Dendritic cell treated with granulocyte-macrophage colony-stimulating factor and Interleukin-4, amounts not matched to agents 40 ng/mL and 50 ng/mL, for 4 days (primary cell): ENCODE measurements at regions of chr1 and their contacts with region 1.

Region 1: DNA sequence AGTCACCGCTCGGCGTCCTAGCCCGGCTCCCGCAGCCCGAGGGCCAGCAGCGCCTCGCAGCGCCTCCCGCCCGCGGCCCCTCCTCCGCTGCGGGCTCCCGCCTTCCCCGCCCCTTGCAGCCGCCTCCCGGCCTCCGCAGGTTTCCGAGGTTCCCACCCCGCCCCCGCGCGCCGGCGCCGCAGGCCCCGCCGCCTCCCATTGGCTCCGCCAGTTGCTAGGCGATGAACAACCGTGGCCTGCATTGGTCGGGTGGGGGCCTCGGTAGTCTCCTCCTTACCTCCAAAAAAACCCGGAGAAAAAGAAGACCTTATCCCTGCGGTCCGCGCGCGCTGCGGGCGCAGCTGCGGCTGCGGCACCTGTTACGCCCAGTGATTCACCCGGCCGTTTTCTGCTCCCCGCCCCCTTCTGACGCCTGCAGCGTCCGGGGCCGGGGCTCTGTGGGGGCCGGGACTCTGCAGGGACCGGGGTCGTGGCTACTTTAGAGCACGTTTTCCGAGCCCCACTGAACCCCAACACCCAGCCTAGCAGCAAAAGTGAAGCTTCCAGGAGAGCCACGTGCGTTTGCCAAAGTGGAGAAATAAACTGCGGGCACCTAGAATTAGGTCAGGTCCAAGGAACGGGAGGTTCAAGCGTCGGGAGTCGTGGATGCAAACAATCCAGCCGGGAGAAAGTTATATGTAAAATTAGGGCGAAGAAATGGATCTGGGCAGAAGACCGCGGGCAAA is at the start of gene SSX2IP:
- H3K4me3 Mint-ChIP-seq: peak within 1 kb of the TSS; percentile 96
- H3K27ac Mint-ChIP-seq: peak within 1 kb of the TSS; percentile 92
- H3K4me1 Mint-ChIP-seq: peaks cover 40% of the 10 kb centered on the region
- H3K27me3 Mint-ChIP-seq: no peaks in the 10 kb centered on the region

Region 2: DNA sequence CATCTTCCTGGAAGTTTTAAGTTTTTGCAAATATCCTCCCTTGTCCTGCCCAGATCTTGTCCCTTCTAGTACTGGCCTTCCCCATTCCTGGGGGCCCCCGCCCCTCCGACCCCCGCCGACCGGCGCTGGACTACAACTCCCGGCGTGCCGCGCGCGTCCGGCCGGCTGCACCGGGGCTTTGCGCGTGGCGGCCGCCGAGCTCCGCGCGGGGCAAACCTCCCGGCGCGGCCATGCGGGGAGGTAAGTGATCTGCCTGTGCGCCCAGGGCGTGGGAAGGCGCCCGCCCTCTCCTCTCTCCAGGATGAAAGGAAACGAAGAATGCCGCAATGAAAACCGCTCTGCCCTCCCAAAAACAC is 392.3 kb before region 1 on chr1:
- intact Hi-C with region 1: loop called (anchors 10 kb)
- H3K4me3 Mint-ChIP-seq: peak overlapping the region; percentile 93
- H3K27ac Mint-ChIP-seq: peak overlapping the region; percentile 89
- H3K4me1 Mint-ChIP-seq: peaks cover 21% of the 10 kb centered on the region
- H3K27me3 Mint-ChIP-seq: no peaks in the 10 kb centered on the region

Region 3: GRCh38 chr1:84344286-84344685 is 346.3 kb before region 1 on chr1:
- intact Hi-C with region 1: no loop called
- H3K4me3 Mint-ChIP-seq: no peak overlapping the region
- H3K27ac Mint-ChIP-seq: no peak overlapping the region
- H3K4me1 Mint-ChIP-seq: peaks cover 19% of the 10 kb centered on the region
- H3K27me3 Mint-ChIP-seq: no peaks in the 10 kb centered on the region

Region 4: DNA sequence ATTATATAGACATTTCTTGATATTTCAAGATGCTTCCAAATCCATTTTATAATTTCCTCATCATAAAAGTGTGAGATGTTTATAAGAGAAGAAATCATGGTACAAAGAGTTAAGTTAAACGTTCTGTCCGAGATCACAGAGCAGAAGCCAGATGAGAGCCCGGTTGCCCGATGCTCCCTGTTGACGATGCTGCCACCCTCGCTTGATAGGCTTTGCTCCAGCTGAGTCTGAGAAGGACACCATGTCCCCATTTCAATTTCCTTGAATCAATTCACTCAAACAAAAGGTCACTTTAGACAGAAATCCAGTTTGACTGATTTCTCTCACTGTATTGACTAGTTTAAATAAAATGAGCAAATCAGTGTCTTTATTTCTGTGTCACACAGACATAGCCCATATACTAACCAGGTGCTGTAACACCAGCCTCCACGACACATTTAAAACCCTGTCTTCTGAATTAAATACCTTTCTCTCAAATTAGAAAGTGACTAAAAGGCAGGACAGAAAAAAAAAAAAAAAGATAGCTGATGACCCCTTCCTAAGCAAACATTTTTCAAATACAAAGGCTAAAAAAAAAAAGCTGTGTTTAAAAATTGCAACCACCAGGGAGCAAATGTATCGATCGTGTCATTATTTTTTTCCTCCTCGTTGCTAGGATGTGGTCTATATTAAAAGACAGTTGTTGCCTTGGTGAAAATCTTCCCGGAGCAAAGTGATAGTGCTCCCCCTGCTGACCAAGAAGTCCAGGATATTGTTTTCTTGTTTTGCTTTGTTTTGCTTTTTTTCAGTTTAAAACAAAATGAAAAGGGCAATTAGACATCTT is 257.1 kb before region 1 on chr1:
- intact Hi-C with region 1: loop called (anchors 5 kb)
- H3K4me3 Mint-ChIP-seq: peak overlapping the region; percentile 37
- H3K27ac Mint-ChIP-seq: peak overlapping the region; percentile 71
- H3K4me1 Mint-ChIP-seq: peaks cover 30% of the 10 kb centered on the region
- H3K27me3 Mint-ChIP-seq: no peaks in the 10 kb centered on the region

Region 5: GRCh38 chr1:84506002-84506728 is 184.4 kb before region 1 on chr1 and contains the starts of genes GNG5 and SPATA1:
- intact Hi-C with region 1: loop called (anchors 2 kb)
- H3K4me3 Mint-ChIP-seq: peak within 1 kb of the TSS; percentile 91
- H3K27ac Mint-ChIP-seq: peak within 1 kb of the TSS; percentile 98
- H3K4me1 Mint-ChIP-seq: peaks cover 37% of the 10 kb centered on the region
- H3K27me3 Mint-ChIP-seq: no peaks in the 10 kb centered on the region

Region 6: DNA sequence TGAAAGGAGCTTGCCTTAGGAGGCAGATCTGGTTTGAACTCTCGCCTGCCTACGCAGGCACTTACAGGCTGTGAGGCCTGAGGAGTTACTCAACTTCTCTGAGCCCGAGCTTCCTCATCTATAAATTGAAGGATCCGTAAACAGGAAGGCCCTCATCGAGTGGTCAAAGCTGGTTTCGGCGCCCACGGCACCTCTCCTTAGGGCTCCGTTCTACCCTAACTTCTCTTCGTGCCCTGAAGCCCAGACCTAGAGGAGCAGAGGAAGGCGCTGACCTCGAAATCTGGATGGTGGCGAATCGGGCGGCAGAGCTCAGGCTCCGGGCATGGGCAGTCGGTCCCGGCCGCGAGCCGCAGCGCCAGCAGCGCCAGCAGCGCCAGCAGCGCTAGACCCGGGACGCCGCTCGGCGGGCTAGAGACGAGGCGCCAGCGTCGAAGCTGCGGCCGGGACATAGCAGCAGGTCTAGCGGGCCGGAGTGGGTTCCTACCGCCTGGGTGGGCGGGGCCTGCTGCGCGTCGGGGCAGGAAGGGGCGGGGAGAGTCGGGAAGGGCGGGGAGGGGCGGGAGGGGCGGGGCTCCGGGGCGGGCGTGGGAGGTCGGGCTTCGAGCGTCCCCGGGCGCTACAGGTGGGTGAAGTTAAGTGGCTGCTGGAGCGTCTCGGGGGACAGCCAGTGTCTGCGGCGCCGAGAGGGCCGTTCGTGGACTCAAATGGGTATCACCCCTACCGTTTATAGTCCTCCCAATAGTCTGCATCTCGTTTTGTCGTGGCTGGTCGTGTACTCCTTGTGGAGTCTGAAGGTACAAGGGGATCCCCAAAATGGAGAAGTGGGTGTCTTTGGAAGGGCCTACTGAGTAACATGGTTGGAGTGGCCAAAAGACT is 116.4 kb before region 1 on chr1 and contains the start of gene CTBS:
- intact Hi-C with region 1: loop called (anchors 5 kb)
- H3K4me3 Mint-ChIP-seq: peak within 1 kb of the TSS; percentile 97
- H3K27ac Mint-ChIP-seq: peak within 1 kb of the TSS; percentile 100
- H3K4me1 Mint-ChIP-seq: peaks cover 50% of the 10 kb centered on the region
- H3K27me3 Mint-ChIP-seq: no peaks in the 10 kb centered on the region

Region 7: GRCh38 chr1:84620720-84621313 is 69.7 kb before region 1 on chr1:
- intact Hi-C with region 1: loop called (anchors 5 kb)
- H3K4me3 Mint-ChIP-seq: peak overlapping the region; percentile 88
- H3K27ac Mint-ChIP-seq: peak overlapping the region; percentile 91
- H3K4me1 Mint-ChIP-seq: peaks cover 30% of the 10 kb centered on the region
- H3K27me3 Mint-ChIP-seq: no peaks in the 10 kb centered on the region

Region 8: DNA sequence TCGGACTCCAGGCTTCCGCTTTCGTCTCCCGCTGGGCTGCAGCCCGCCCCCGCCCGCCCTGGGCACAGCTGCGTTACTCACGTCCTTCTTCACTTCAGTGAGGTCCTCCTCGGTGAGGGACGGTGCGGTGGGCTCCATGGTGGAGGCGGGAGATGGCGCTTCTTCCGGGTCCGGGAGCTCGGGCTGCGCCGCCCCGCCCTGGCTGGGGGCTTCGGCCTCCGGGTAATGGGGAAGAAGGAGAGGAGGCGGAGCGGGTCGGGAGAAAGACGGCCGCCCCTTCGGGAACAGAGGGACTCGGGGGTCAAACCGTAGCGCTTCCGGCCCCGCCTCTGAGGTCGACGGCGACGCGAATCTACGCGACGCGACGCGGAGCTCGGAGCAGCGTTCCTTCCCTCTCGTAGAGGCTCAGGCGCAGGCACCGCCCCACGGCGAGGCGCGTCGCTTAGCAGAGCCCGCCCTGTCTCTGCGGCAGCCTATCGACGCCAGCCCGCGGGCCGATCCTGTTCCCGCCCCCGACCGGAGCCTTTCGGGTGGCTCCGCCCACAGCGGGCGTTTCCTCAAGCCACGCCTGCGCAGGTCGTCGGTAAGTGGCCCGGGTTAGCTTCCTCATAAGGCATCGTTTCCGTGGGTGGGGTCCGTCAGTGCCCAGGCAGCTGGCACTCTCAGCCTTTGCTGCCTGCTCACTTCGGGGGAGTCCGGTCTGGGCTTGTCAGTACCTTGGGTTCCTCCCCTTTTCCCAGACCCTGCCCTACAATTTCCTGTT is 585.8 kb after region 1 on chr1 and contains the start of gene BCL10:
- intact Hi-C with region 1: loop called (anchors 5 kb)
- H3K4me3 Mint-ChIP-seq: peak within 1 kb of the TSS; percentile 97
- H3K27ac Mint-ChIP-seq: peak within 1 kb of the TSS; percentile 99
- H3K4me1 Mint-ChIP-seq: peaks cover 56% of the 10 kb centered on the region
- H3K27me3 Mint-ChIP-seq: peaks cover 5% of the 10 kb centered on the region

Region 9: DNA sequence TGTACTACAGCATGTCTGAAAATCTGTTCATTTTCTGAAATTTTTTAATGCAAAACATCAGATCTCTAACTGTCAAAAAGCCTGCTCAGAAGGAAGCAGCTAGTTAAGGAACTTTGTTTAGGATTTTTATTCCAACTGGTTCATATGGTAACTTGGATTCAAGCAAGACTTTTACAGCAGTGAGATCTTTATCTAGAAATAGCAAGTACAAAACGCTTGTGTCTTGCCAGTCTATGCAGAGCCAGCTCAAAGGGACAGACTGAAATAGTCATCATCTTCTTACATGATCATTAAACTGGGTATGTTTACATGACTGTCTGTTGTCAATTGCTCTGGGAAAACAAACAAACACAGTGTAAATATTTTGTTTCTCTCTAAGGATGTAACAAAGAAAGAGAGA is 736.8 kb after region 1 on chr1:
- intact Hi-C with region 1: no loop called
- H3K4me3 Mint-ChIP-seq: no peak overlapping the region
- H3K27ac Mint-ChIP-seq: no peak overlapping the region
- H3K4me1 Mint-ChIP-seq: peaks cover 12% of the 10 kb centered on the region
- H3K27me3 Mint-ChIP-seq: no peaks in the 10 kb centered on the region